SK-N-SH (cell line): ENCODE measurements at regions of chr17 and their contacts with region 1.

Region 1: GRCh38 chr17:309361-309888 is 43.2 kb downstream of the RPH3AL start:
- DNase-seq: peak; percentile 86
- H3K4me3 ChIP-seq: no peak overlapping the region
- H3K27ac ChIP-seq: no peak overlapping the region
- H3K4me1 ChIP-seq: peaks cover 0 to 10% of the 10 kb centered on the region in 2 experiments; a peak in 1 of 4 replicates
- H3K27me3 ChIP-seq: no peaks in the 10 kb centered on the region
- CTCF ChIP-seq: no peak; the same call in none of the 2 replicates
- EP300 ChIP-seq: no peak
- RAD21 ChIP-seq: peak; percentile 32; the same call in 1 of the 2 replicates

Region 2: GRCh38 chr17:143782-144281 is 165.6 kb before region 1 on chr17:
- CTCF ChIA-PET with region 1: interaction called, 12 read pairs
- POLR2A ChIA-PET with region 1: no interaction called
- DNase-seq: peak; percentile 94
- H3K4me3 ChIP-seq: peak overlapping the region in 1 of 2 experiments; percentile 52; a peak in 2 of 4 replicates
- H3K27ac ChIP-seq: no peak overlapping the region
- H3K4me1 ChIP-seq: peaks cover 0 to 2% of the 10 kb centered on the region in 2 experiments; a peak in 1 of 4 replicates
- H3K27me3 ChIP-seq: no peaks in the 10 kb centered on the region
- CTCF ChIP-seq: peak; percentile 68
- EP300 ChIP-seq: no peak
- RAD21 ChIP-seq: peak; percentile 75

Region 3: GRCh38 chr17:164303-165235 is 144.9 kb before region 1 on chr17:
- CTCF ChIA-PET with region 1: interaction called, 14 read pairs
- POLR2A ChIA-PET with region 1: no interaction called
- DNase-seq: peak; percentile 88
- H3K4me3 ChIP-seq: no peak overlapping the region; a peak in 1 of 4 replicates
- H3K27ac ChIP-seq: no peak overlapping the region; a peak in 1 of 4 replicates
- H3K4me1 ChIP-seq: no peaks in the 10 kb centered on the region
- H3K27me3 ChIP-seq: no peaks in the 10 kb centered on the region; the same call in 1 of the 2 replicates
- CTCF ChIP-seq: peak; percentile 54
- EP300 ChIP-seq: no peak
- RAD21 ChIP-seq: peak; percentile 84

Region 4: DNA sequence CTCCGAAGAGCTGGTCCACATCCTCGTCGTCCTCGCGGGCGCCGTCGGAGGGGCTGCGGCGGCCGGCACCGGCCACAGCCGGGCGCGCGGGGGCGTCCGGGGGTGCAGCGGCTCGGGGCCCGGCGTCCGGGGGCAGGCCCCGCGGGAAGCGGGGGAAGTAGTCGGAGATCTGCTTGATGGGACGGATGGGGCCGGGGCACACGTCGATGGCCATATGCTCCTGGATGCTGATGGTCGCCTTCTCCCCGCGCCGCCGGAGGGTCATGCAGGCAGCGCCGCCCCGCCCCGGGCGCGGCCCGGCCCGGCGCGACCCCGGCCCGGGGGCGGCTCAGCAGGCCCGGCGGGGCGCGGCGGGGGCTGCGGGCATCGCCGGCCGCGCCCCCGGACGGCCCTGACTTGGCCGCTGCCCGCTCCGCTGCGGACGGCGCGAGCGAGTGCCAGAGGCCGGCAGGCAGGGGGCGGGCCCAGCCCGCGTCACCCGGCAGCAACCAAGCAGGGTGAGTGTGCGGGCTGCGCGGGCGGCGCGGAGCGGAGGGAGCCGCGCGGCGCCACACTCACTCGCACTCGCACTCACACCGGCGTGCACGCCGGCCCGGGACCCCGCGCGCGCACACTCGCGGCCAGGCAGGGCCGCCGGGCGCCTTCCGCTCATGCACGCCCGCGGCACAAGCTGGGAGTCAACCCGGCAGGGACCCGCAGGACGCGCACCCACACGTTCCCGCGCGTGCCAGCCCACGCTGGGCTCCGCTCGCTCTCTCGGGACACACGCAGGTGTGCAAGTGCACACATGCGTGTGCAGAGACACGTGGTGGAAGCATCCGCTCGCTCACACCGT is 128.0 kb before region 1 on chr17 and contains the start of gene DOC2B:
- CTCF ChIA-PET with region 1: interaction called, 38 read pairs
- POLR2A ChIA-PET with region 1: interaction called, 3 read pairs
- DNase-seq: peak; percentile 93
- H3K4me3 ChIP-seq: peak within 1 kb of the TSS in 1 of 2 experiments; percentile 45; a peak in 2 of 4 replicates
- H3K27ac ChIP-seq: peak within 1 kb of the TSS in 1 of 2 experiments; percentile 94; a peak in 1 of 4 replicates
- H3K4me1 ChIP-seq: peaks cover 0 to 38% of the 10 kb centered on the region in 2 experiments; a peak in 2 of 4 replicates
- H3K27me3 ChIP-seq: peaks cover 44% of the 10 kb centered on the region
- CTCF ChIP-seq: no peak
- EP300 ChIP-seq: no peak
- RAD21 ChIP-seq: peak; percentile 22; the same call in 1 of the 2 replicates
- polyA plus RNA-seq, gene DOC2B: 0.16 and 0.81 TPM in 2 replicates

Region 5: GRCh38 chr17:202501-202951 is 106.9 kb before region 1 on chr17:
- CTCF ChIA-PET with region 1: interaction called, 11 read pairs
- POLR2A ChIA-PET with region 1: no interaction called
- DNase-seq: no peak
- H3K4me3 ChIP-seq: no peak overlapping the region
- H3K27ac ChIP-seq: no peak overlapping the region
- H3K4me1 ChIP-seq: no peaks in the 10 kb centered on the region; a peak in 1 of 4 replicates
- H3K27me3 ChIP-seq: no peaks in the 10 kb centered on the region
- CTCF ChIP-seq: no peak
- EP300 ChIP-seq: no peak
- RAD21 ChIP-seq: no peak

Region 6: DNA sequence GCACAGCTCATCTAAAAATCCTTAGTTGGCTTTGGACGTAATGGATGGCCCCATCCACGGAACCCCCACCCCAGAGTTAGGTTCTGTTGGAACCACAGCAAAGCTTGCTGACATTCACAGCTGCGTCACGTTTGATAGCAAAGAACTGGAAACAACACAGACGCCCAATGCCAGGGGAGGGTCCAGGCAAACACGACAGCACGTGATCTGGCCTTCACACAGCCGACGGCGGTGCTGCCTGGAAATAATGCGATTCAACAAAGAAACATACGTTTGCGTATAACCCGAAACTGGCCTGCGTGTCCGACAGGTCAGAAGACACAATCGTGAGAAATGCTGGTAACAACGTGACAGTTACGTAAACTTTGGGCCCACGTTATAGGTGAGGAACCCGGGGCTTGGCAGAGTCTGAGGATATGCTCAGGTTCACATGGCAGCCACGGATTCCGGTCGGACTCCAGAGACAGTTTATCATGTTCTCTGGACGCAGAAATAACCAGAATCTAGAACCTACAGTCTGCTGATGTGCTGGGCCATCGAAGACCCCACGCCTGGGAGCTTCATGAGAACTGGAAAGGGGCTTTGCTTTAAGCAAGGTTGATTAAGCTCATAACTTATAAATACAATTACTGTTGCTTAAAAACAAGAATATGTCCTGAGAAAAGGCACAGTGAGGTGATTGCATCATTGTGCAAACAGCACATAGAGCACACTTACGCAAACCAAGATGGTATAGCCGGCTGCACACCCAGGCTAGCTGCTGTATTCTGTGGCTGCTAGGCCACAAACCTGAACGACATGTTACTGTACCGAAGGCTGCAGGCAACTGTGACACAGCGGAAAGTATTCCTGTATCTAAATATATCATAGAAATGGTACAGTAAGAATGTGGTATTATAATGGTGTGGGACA is 27.2 kb before region 1 on chr17:
- CTCF ChIA-PET with region 1: interaction called, 16 read pairs
- POLR2A ChIA-PET with region 1: no interaction called
- DNase-seq: no peak
- H3K4me3 ChIP-seq: no peak overlapping the region
- H3K27ac ChIP-seq: no peak overlapping the region
- H3K4me1 ChIP-seq: no peaks in the 10 kb centered on the region
- H3K27me3 ChIP-seq: no peaks in the 10 kb centered on the region
- CTCF ChIP-seq: no peak
- EP300 ChIP-seq: no peak
- RAD21 ChIP-seq: no peak

Region 7: GRCh38 chr17:298791-299450 is 10.5 kb before region 1 on chr17:
- CTCF ChIA-PET with region 1: interaction called, 14 read pairs
- POLR2A ChIA-PET with region 1: no interaction called
- DNase-seq: no peak
- H3K4me3 ChIP-seq: no peak overlapping the region
- H3K27ac ChIP-seq: peak overlapping the region in 1 of 2 experiments; percentile 90; a peak in 2 of 4 replicates
- H3K4me1 ChIP-seq: peaks cover 0 to 49% of the 10 kb centered on the region in 2 experiments; a peak in 1 of 4 replicates
- H3K27me3 ChIP-seq: no peaks in the 10 kb centered on the region
- CTCF ChIP-seq: no peak
- EP300 ChIP-seq: no peak
- RAD21 ChIP-seq: no peak

Region 8: GRCh38 chr17:333626-334396 is 24.4 kb after region 1 on chr17:
- CTCF ChIA-PET with region 1: no interaction called
- POLR2A ChIA-PET with region 1: no interaction called
- DNase-seq: peak; percentile 87
- H3K4me3 ChIP-seq: no peak overlapping the region
- H3K27ac ChIP-seq: no peak overlapping the region
- H3K4me1 ChIP-seq: peaks cover 0 to 8% of the 10 kb centered on the region in 2 experiments; a peak in 1 of 4 replicates
- H3K27me3 ChIP-seq: no peaks in the 10 kb centered on the region
- CTCF ChIP-seq: no peak
- EP300 ChIP-seq: no peak
- RAD21 ChIP-seq: no peak

Region 9: GRCh38 chr17:511001-511698 is 201.7 kb after region 1 on chr17:
- CTCF ChIA-PET with region 1: no interaction called
- POLR2A ChIA-PET with region 1: no interaction called
- DNase-seq: no peak
- H3K4me3 ChIP-seq: no peak overlapping the region
- H3K27ac ChIP-seq: peak overlapping the region in 1 of 2 experiments; percentile 25; a peak in 1 of 4 replicates
- H3K4me1 ChIP-seq: peaks cover 9 to 34% of the 10 kb centered on the region in 2 experiments
- H3K27me3 ChIP-seq: no peaks in the 10 kb centered on the region
- CTCF ChIP-seq: 0 out of 2 replicates have a peak, but pooled peaks have one; percentile 9
- EP300 ChIP-seq: no peak
- RAD21 ChIP-seq: no peak